K562 (cell line): ENCODE measurements at regions of chr11 and their contacts with region 1.

Region 1: DNA sequence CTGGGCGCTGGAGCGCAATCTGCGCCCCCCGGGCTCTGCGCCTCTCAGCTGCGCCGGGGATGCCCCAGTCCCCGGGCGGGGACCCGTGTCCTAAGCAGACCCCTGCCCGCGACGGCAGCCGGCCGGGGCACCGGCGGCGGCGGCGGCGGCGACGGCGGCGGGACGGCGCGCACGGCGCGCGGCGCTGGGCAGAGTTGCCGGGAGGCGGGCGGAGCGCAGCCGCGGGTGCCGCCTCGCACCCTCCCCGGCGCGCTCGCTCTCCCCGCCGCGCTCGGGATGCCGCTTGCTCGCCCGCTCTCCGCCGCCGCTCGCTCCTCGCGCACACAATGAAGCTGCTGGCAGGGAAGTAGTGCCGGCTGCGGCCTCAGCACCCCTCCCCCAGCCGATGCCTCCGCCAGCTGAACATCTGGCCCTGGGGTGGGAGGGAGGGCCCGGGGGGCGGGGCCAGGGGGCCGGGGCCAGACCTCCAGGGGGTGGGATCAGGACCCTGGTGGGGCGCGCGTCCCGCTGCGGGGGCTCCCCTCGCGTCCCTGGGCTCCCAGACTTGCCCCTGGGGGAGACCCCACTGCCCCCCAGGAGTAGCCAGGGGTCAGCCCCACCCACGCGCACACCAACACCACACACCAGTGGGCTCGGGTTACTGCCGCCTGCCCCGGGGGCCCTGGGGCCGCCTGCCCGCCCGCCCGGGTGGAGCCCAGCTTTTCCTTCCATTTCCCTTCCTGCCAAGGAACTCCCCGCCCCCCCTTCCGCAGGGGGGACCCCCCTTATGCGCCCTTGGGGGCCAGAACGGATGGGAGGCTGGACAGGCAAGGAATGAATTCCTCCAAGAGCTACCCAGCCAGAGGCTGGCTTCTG is at the start of gene RCOR2:
- DNase-seq: peak; percentile 86 to 92 (median 92)
- ATAC-seq: peak; percentile 42
- H3K4me3 ChIP-seq: peak within 1 kb of the TSS; percentile 48
- H3K27ac ChIP-seq: peak within 1 kb of the TSS; percentile 76
- H3K4me1 ChIP-seq: peaks cover 36 to 68% of the 10 kb centered on the region in 2 experiments
- H3K27me3 ChIP-seq: no peaks in the 10 kb centered on the region
- CTCF ChIP-seq: no peak
- EP300 ChIP-seq: no peak
- POLR2A ChIP-seq: no peak
- RAD21 ChIP-seq: no peak
- polyA plus RNA-seq, gene RCOR2: 0.04 TPM in 1 of 2 experiments, not detected in the other

Region 2: GRCh38 chr11:63768237-63769043 is 148.6 kb before region 1 on chr11 and contains the start of gene ZFTA:
- CTCF ChIA-PET with region 1: interaction called, 3 read pairs
- POLR2A ChIA-PET with region 1: interaction called, 3 read pairs
- in situ Hi-C with region 1: no loop called
- intact Hi-C with region 1: loop called (anchors 5 kb)
- DNase-seq: peak; percentile 72 to 91 (median 84)
- ATAC-seq: peak; percentile 70
- H3K4me3 ChIP-seq: peak within 1 kb of the TSS; percentile 60
- H3K27ac ChIP-seq: peak within 1 kb of the TSS; percentile 65
- H3K4me1 ChIP-seq: peaks cover 8 to 48% of the 10 kb centered on the region in 2 experiments
- H3K27me3 ChIP-seq: no peaks in the 10 kb centered on the region
- CTCF ChIP-seq: peak in 2 of 3 experiments; percentile 64 to 79; a peak in 5 of 6 replicates
- EP300 ChIP-seq: no peak
- POLR2A ChIP-seq: no peak
- RAD21 ChIP-seq: peak in 1 of 2 experiments; percentile 76; a peak in 3 of 4 replicates
- polyA plus RNA-seq, gene ZFTA: 0.45 TPM

Region 3: GRCh38 chr11:63938479-63939396 is 21.7 kb after region 1 on chr11 and contains the start of gene NAA40:
- CTCF ChIA-PET with region 1: interaction called, 6 read pairs
- POLR2A ChIA-PET with region 1: no interaction called
- in situ Hi-C with region 1: no loop called
- intact Hi-C with region 1: loop called (anchors 1 kb)
- DNase-seq: peak; percentile 96 to 98 (median 97)
- ATAC-seq: peak; percentile 94
- H3K4me3 ChIP-seq: peak within 1 kb of the TSS; percentile 72
- H3K27ac ChIP-seq: peak within 1 kb of the TSS; percentile 74
- H3K4me1 ChIP-seq: peaks cover 38 to 41% of the 10 kb centered on the region in 2 experiments
- H3K27me3 ChIP-seq: no peaks in the 10 kb centered on the region
- CTCF ChIP-seq: peak in 1 of 3 experiments; percentile 22; a peak in 2 of 6 replicates
- EP300 ChIP-seq: no peak
- POLR2A ChIP-seq: peak; percentile 57
- RAD21 ChIP-seq: no peak
- polyA plus RNA-seq, gene NAA40: 6.2 to 11.0 TPM

Region 4: GRCh38 chr11:64131683-64132190 is 214.7 kb after region 1 on chr11:
- CTCF ChIA-PET with region 1: no interaction called
- POLR2A ChIA-PET with region 1: no interaction called
- in situ Hi-C with region 1: no loop called
- intact Hi-C with region 1: no loop called
- DNase-seq: no peak
- ATAC-seq: no peak
- H3K4me3 ChIP-seq: no peak overlapping the region
- H3K27ac ChIP-seq: no peak overlapping the region
- H3K4me1 ChIP-seq: peaks cover 0 to 34% of the 10 kb centered on the region in 2 experiments; a peak in 2 of 5 replicates
- H3K27me3 ChIP-seq: no peaks in the 10 kb centered on the region
- CTCF ChIP-seq: no peak
- EP300 ChIP-seq: no peak
- POLR2A ChIP-seq: no peak
- RAD21 ChIP-seq: no peak